A673 (cell line): ENCODE measurements at regions of chr1 and their contacts with region 1.

Region 1: GRCh38 chr1:171644805-171645483 is 7.5 kb downstream of the MYOC start:
- DNase-seq: peak; percentile 92
- H3K4me3 ChIP-seq: no peak overlapping the region
- H3K27ac ChIP-seq: no peak overlapping the region
- H3K4me1 ChIP-seq: no peaks in the 10 kb centered on the region
- H3K27me3 ChIP-seq: no peaks in the 10 kb centered on the region
- CTCF ChIP-seq: peak; percentile 89

Region 2: DNA sequence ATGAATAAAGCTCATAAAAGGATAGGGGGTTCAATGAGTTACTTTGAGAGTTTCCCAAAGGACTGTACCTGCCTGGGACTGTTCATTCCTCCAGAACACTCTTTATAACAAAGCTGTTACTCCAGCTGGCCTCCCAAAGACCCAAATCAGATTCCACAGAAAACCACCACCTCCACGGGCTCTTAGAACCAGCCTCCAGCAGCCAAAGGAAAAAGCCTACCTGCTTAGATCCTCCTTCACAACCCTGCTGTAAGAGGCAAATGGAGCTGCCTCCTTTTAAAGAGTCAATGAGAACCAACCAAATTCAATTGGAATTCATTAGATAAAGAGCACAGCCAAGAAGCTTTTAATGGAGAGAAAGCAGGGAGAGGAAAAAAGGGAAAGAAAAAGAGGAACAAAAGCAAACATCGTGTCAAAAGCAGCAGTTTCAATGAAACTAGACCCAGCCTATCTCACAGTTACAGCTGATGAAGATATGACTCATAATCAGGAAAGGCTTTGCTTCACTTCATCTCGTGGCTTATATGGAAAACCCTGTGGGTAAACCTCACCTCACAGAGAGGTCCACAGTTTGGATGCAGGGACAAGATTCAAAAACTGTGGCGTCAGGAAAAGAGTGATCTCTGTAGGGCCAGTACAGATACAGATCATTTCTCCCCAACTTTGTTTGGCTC is 358.8 kb before region 1 on chr1:
- CTCF ChIA-PET with region 1: no interaction called
- POLR2A ChIA-PET with region 1: no interaction called
- intact Hi-C with region 1: no loop called
- DNase-seq: no peak
- H3K4me3 ChIP-seq: no peak overlapping the region
- H3K27ac ChIP-seq: no peak overlapping the region
- H3K4me1 ChIP-seq: no peaks in the 10 kb centered on the region
- H3K27me3 ChIP-seq: no peaks in the 10 kb centered on the region
- CTCF ChIP-seq: no peak

Region 3: GRCh38 chr1:171674431-171675405 is 29.8 kb after region 1 on chr1:
- CTCF ChIA-PET with region 1: no interaction called
- POLR2A ChIA-PET with region 1: no interaction called
- intact Hi-C with region 1: no loop called
- DNase-seq: no peak
- H3K4me3 ChIP-seq: no peak overlapping the region
- H3K27ac ChIP-seq: no peak overlapping the region
- H3K4me1 ChIP-seq: peaks cover 4% of the 10 kb centered on the region
- H3K27me3 ChIP-seq: no peaks in the 10 kb centered on the region
- CTCF ChIP-seq: no peak

Region 4: GRCh38 chr1:171715813-171716251 is 70.9 kb after region 1 on chr1:
- CTCF ChIA-PET with region 1: interaction called, 25 read pairs
- POLR2A ChIA-PET with region 1: no interaction called
- intact Hi-C with region 1: no loop called
- DNase-seq: peak; percentile 63
- H3K4me3 ChIP-seq: no peak overlapping the region
- H3K27ac ChIP-seq: no peak overlapping the region
- H3K4me1 ChIP-seq: peaks cover 10% of the 10 kb centered on the region
- H3K27me3 ChIP-seq: no peaks in the 10 kb centered on the region
- CTCF ChIP-seq: peak; percentile 63

Region 5: DNA sequence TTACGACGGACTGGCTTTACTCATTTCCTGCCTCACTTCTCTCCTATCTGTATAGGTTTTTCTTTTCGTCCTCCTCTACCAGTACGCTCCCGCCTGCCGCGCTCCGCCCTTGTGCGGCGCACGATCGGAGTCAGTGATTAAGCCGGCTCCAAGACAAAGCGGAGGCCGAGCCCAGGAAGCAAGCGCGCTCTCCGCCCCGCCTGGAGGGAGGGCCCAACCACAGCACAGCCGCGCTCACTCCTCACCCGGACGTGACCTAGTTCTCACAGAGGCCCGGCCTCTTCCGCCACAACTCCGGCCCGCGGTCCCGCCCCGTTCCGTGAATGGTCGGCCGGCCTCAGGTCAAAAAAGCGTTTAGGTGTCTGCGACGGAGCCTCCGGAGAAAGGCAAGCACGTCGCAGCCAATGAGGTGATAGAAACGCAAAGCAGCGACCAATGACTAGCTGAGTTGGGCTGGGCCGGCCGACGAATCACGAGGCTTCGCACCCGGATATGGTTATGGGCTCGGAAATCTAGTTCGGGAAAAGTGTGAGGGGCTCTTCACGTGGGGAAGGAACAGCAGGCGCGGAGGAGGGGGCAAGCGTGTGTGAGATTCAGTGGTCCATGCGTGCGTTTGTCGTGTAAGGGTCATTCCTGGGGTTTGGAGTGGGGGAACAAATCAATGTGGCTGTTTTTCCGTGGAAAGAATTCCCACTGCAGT is 136.4 kb after region 1 on chr1 and contains the start of gene METTL13:
- CTCF ChIA-PET with region 1: interaction called, 4 read pairs
- POLR2A ChIA-PET with region 1: no interaction called
- intact Hi-C with region 1: loop called (anchors 5 kb)
- DNase-seq: peak; percentile 100
- H3K4me3 ChIP-seq: peak within 1 kb of the TSS; percentile 56
- H3K27ac ChIP-seq: peak within 1 kb of the TSS; percentile 78
- H3K4me1 ChIP-seq: peaks cover 4% of the 10 kb centered on the region
- H3K27me3 ChIP-seq: no peaks in the 10 kb centered on the region
- CTCF ChIP-seq: no peak
- total RNA-seq, gene METTL13: 46.5 and 49.9 TPM in 2 replicates

Region 6: DNA sequence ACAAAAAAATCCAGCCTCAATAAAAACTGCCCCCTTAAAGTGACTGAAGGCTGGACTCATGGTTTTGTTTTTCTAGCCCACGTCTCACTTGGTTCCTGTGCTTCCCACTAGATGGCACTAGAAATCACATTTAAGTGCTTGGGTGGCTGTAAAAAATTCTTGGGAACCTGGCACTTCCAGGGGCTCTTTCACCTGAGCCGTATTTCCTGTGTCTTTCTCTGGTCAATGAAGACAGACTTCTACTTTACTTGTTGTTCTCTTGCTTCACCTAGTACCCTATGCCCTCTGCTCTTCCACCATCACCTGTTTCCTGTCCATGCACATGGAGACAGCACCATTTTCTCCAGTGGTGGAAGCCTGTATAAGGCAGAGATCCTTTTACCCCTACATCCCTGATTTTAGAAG is 156.5 kb after region 1 on chr1:
- CTCF ChIA-PET with region 1: interaction called, 7 read pairs
- POLR2A ChIA-PET with region 1: no interaction called
- intact Hi-C with region 1: loop called (anchors 5 kb)
- DNase-seq: peak; percentile 53
- H3K4me3 ChIP-seq: no peak overlapping the region
- H3K27ac ChIP-seq: no peak overlapping the region
- H3K4me1 ChIP-seq: no peaks in the 10 kb centered on the region
- H3K27me3 ChIP-seq: no peaks in the 10 kb centered on the region
- CTCF ChIP-seq: peak; percentile 81

Region 7: DNA sequence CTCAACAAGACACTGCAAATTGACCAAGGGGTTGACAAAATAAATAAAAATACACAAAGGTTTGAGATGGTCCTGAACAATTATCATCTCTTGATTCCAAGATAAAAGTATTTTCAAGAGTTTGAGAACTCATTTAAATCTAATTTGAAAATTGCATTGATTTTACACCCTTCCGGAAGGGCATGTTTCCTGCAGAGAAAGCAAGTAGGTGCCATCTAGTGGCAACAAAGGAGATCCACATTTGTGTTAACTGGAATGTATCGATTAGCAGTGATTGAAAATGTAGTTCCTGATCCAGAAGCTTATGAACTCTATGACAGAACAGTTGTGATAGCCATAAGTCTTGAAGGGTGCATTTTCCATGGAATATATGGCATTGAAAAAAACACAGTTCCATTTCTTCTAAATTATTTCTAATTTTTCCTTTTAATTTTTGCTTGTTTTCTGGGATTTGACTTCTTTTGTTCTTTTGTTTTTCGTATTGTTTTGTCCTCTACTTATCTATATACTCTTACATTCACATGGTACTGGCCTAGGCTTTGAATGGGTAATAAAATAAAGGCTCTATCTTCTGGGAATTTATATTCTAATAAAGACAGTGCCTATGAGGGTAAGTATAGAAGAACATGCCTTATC is 340.0 kb after region 1 on chr1:
- CTCF ChIA-PET with region 1: interaction called, 5 read pairs
- POLR2A ChIA-PET with region 1: no interaction called
- intact Hi-C with region 1: loop called (anchors 2 kb)
- DNase-seq: peak; percentile 60
- H3K4me3 ChIP-seq: no peak overlapping the region
- H3K27ac ChIP-seq: no peak overlapping the region
- H3K4me1 ChIP-seq: no peaks in the 10 kb centered on the region
- H3K27me3 ChIP-seq: no peaks in the 10 kb centered on the region
- CTCF ChIP-seq: peak; percentile 87